AG04450 (cell line): ENCODE measurements at regions of chr15 and their contacts with region 1.

Region 1: GRCh38 chr15:40893733-40894688 is at the start of gene VPS18:
- DNase-seq: peak; percentile 94
- H3K4me3 ChIP-seq: peak within 1 kb of the TSS; percentile 87
- H3K27ac ChIP-seq: peak within 1 kb of the TSS; percentile 96
- H3K27me3 ChIP-seq: no peaks in the 10 kb centered on the region
- CTCF ChIP-seq: peak; percentile 83
- polyA plus RNA-seq, gene VPS18: 18.7 and 25.7 TPM in 2 replicates

Region 2: DNA sequence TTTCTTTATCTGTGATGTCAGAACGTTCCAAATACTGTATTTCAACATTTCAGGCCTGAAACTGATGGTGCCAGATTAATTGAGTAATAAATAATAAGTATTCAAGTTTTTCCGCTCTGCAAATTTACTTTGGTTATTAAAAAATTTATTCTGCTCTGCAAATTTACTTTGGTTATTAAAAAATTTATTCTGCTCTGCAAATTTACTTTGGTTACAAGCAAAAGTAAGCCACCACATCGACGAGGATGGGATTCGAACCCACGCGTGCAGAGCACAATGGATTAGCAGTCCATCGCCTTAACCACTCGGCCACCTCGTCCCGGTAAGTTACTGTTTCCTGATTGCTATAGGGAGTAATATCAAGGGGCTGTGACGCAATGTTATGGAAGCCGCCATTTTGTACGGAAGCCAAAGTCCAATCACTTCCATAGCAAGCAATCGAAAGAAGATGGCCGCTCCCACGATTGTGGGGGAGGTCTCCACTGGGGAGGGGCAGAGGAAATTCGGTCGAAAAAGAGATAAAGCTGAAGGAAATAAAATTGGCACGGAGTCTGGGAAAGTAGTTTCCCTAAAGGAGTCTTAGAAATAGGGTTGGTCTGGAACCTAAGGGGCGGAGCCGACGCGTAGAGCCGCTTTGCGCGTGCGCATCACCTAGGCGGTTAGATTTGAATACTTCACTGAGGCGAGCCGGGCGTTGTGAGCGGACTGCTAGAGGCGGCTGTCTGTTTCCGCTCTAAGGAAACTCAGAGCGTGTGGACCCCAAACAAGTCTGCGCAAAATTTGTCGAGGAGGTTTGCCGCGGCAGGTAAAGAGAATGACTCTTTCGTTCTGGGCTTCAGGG is 300.2 kb before region 1 on chr15 and contains the start of gene KNL1:
- CTCF ChIA-PET with region 1: interaction called, 31 read pairs
- POLR2A ChIA-PET with region 1: interaction called, 5 read pairs
- DNase-seq: peak; percentile 88
- H3K4me3 ChIP-seq: peak within 1 kb of the TSS; percentile 84
- H3K27ac ChIP-seq: peak within 1 kb of the TSS; percentile 92
- H3K27me3 ChIP-seq: no peaks in the 10 kb centered on the region
- CTCF ChIP-seq: no peak
- polyA plus RNA-seq, gene KNL1: 3.0 and 5.6 TPM in 2 replicates

Region 3: DNA sequence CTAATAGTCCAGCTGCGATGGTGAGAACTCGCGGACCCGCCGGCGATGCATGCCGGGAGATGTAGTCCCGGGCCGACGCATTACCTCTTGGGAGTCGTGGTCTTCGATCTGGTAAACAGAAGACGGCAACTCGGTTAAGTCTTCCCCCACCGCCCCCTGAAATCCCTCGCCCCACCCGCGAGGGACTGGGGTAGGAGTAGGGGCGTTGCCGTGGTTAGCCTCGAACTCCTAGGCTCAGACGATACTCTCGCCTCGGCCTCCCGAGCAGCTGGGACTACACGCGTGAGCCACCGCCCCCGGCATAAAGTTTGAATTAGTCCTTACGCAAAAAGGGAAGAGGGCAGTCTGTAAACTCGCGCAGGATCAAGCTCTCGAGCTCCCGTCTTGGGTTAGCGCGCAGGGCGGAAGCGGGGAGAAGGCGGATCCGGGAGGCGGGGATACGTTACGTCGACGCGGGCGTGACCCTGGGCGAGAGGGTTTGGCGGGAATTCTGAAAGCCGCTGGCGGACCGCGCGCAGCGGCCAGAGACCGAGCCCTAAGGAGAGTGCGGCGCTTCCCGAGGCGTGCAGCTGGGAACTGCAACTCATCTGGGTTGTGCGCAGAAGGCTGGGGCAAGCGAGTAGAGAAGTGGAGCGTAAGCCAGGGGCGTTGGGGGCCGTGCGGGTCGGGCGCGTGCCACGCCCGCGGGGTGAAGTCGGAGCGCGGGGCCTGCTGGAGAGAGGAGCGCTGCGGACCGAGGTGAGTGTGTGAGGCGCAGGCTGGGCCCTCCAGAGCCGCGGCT is 199.1 kb before region 1 on chr15 and contains the start of gene RAD51:
- CTCF ChIA-PET with region 1: interaction called, 10 read pairs
- POLR2A ChIA-PET with region 1: interaction called, 4 read pairs
- DNase-seq: peak; percentile 84
- H3K4me3 ChIP-seq: peak within 1 kb of the TSS; percentile 97
- H3K27ac ChIP-seq: peak within 1 kb of the TSS; percentile 100
- H3K27me3 ChIP-seq: no peaks in the 10 kb centered on the region
- CTCF ChIP-seq: no peak
- polyA plus RNA-seq, gene RAD51: 5.1 and 6.0 TPM in 2 replicates

Region 4: DNA sequence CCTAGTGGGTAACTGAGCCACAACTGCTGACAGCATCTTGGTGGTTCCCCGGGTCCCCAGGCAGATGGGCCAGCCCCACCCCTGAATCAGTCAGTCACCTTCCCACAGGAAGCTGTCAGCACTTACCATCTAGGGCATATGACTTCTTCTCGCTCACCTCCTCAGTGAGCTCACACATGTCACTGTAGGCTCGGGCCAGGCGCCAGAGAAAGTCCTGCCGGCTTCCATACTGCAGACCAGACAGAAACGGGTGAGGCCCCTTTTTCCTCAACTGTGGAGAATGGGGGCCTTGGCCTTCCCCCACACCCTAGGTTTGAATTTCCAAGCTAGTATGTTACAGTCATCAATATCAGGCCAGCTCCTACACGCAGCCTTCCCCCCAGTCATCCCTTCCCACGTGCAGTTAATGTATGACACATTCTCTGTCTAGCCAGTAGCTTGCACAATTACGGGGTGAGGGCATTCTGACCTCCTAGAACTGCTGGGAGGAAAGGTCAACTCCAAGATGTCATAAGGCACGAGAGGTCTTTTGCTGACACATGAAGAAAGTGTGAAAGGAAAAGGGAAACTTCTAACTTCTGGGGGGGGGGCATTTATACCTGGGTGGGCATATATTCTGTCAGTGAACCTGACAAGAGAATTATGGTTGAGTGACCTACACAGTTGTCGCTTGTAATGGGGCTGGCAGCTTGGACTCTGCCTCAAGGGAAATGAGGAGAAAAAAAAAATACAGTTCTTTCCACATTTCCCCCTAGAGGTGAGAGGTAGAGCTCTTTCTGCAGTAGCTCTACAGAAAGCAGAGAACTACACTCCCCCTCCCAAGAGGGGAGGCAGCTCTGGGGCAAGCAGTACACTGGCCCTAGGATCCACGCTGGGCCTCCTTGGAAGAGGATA is 149.8 kb before region 1 on chr15:
- CTCF ChIA-PET with region 1: interaction called, 11 read pairs
- POLR2A ChIA-PET with region 1: no interaction called
- DNase-seq: no peak
- H3K4me3 ChIP-seq: no peak overlapping the region
- H3K27ac ChIP-seq: peak overlapping the region; percentile 39
- H3K27me3 ChIP-seq: no peaks in the 10 kb centered on the region
- CTCF ChIP-seq: peak; percentile 31; the same call in 1 of the 2 replicates

Region 5: GRCh38 chr15:40878785-40879184 is 15.2 kb before region 1 on chr15:
- CTCF ChIA-PET with region 1: interaction called, 12 read pairs
- POLR2A ChIA-PET with region 1: no interaction called
- DNase-seq: no peak
- H3K4me3 ChIP-seq: no peak overlapping the region
- H3K27ac ChIP-seq: no peak overlapping the region
- H3K27me3 ChIP-seq: no peaks in the 10 kb centered on the region
- CTCF ChIP-seq: no peak